ENCODE measurements at regions of chr4 and their contacts with region 1.

Region 1: DNA sequence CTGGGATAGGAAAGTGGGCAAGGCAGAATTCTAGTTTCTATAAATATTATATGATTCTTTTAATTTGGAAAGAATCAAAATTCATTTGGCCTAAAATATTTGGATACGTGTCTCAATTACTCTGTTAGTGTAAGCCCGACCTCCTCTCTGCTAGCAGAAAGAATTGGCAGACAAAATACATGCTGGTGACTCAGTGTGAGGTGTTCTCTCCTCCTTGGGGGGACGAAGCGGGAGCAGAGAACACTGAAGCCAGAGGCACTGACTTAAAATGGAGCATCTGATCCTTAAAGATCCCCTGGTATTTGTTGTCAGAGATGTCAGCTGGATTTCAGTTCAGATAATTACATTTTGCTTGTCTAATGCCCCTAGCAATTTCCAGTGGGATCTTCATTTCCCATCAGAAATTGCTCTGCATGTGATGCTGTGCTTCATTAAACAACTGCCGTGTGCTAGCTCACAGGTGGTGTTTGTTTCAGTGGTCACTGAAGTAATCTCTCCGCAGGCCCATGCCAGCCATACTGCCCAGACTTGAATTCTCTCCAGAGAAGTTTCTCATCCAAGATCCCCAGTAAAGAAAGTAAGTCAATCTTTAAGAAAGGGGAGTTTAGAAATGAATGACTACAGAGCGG is 188.7 kb upstream of the TLL1 start:
- DNase-seq: peak; percentile 90
- ATAC-seq: peak; percentile 67
- H3K4me3 ChIP-seq: peak overlapping the region; percentile 36; the same call in 1 of the 2 replicates
- H3K27ac ChIP-seq: peak overlapping the region; percentile 71
- H3K4me1 ChIP-seq: peaks cover 64% of the 10 kb centered on the region
- H3K27me3 ChIP-seq: no peaks in the 10 kb centered on the region
- CTCF ChIP-seq: no peak

Region 2: DNA sequence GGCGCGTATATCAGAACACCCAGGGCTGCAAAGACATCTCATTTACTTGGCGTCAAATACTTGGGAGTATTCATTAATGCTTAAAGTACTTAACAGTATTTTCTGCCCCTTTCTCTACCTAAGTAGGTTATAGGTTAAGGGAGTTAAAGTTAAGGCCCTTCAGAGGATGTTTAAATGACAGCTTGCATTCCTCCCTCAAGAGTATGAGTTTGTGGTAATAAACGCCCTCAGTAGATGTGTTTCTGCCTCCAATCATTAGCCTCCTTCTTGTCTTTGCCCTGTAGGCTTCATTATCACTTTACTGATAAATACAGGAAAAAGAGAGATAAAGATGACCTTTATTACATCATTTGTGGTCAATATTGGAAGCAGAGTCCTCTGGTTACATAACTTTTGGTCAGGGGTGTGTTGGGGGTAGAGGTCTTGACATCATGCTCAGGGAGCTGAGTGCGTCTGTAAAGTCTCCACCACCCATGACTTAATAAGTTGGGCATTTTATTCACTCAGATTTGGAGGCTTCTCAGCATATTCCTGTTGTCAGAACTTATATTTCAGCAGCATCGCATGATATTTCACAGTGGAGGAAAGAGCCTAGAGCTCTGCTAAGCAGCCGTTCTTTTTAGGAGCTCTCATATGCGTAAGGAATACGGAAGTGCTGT is 159.6 kb before region 1 on chr4:
- CTCF ChIA-PET with region 1: no interaction called
- POLR2A ChIA-PET with region 1: no interaction called
- intact Hi-C with region 1: no loop called
- DNase-seq: no peak
- ATAC-seq: no peak
- H3K4me3 ChIP-seq: no peak overlapping the region
- H3K27ac ChIP-seq: no peak overlapping the region
- H3K4me1 ChIP-seq: no peaks in the 10 kb centered on the region
- H3K27me3 ChIP-seq: no peaks in the 10 kb centered on the region
- CTCF ChIP-seq: no peak

Region 3: GRCh38 chr4:165563851-165564250 is 120.4 kb before region 1 on chr4:
- CTCF ChIA-PET with region 1: no interaction called
- POLR2A ChIA-PET with region 1: no interaction called
- intact Hi-C with region 1: no loop called
- DNase-seq: peak; percentile 54
- ATAC-seq: peak; percentile 60
- H3K4me3 ChIP-seq: no peak overlapping the region
- H3K27ac ChIP-seq: no peak overlapping the region
- H3K4me1 ChIP-seq: peaks cover 10% of the 10 kb centered on the region; the same call in 1 of the 2 replicates
- H3K27me3 ChIP-seq: no peaks in the 10 kb centered on the region
- CTCF ChIP-seq: no peak

Region 4: GRCh38 chr4:165838575-165838974 is 154.3 kb after region 1 on chr4:
- CTCF ChIA-PET with region 1: no interaction called
- POLR2A ChIA-PET with region 1: no interaction called
- intact Hi-C with region 1: loop called (anchors 5 kb)
- DNase-seq: no peak
- ATAC-seq: no peak
- H3K4me3 ChIP-seq: no peak overlapping the region
- H3K27ac ChIP-seq: no peak overlapping the region
- H3K4me1 ChIP-seq: peaks cover 16% of the 10 kb centered on the region; the same call in 1 of the 2 replicates
- H3K27me3 ChIP-seq: no peaks in the 10 kb centered on the region
- CTCF ChIP-seq: no peak

Region 5: GRCh38 chr4:166073783-166074182 is 389.5 kb after region 1 on chr4:
- CTCF ChIA-PET with region 1: no interaction called
- POLR2A ChIA-PET with region 1: no interaction called
- intact Hi-C with region 1: loop called (anchors 2 kb)
- DNase-seq: no peak
- ATAC-seq: no peak
- H3K4me3 ChIP-seq: no peak overlapping the region
- H3K27ac ChIP-seq: no peak overlapping the region
- H3K4me1 ChIP-seq: peaks cover 31% of the 10 kb centered on the region
- H3K27me3 ChIP-seq: no peaks in the 10 kb centered on the region
- CTCF ChIP-seq: no peak